CD4-positive, alpha-beta T cell (primary cell): ENCODE measurements at regions of chr1 and their contacts with region 1.

Region 1: GRCh38 chr1:154558575-154559465 is at the start of gene UBE2Q1:
- DNase-seq: peak; percentile 99 to 100 (median 99)
- ATAC-seq: peak; percentile 87
- H3K4me3 ChIP-seq: peak within 1 kb of the TSS; percentile 87
- H3K4me3 Mint-ChIP-seq: peak within 1 kb of the TSS; percentile 91
- H3K27ac ChIP-seq: peak within 1 kb of the TSS; percentile 64 to 84
- H3K27ac Mint-ChIP-seq: peak within 1 kb of the TSS; percentile 83
- H3K4me1 ChIP-seq: peaks cover 46% of the 10 kb centered on the region
- H3K4me1 Mint-ChIP-seq: peaks cover 42% of the 10 kb centered on the region
- H3K27me3 ChIP-seq: no peaks in the 10 kb centered on the region
- H3K27me3 Mint-ChIP-seq: no peaks in the 10 kb centered on the region
- CTCF ChIP-seq: no peak
- total RNA-seq, gene UBE2Q1: 78.7 to 82.3 TPM

Region 2: DNA sequence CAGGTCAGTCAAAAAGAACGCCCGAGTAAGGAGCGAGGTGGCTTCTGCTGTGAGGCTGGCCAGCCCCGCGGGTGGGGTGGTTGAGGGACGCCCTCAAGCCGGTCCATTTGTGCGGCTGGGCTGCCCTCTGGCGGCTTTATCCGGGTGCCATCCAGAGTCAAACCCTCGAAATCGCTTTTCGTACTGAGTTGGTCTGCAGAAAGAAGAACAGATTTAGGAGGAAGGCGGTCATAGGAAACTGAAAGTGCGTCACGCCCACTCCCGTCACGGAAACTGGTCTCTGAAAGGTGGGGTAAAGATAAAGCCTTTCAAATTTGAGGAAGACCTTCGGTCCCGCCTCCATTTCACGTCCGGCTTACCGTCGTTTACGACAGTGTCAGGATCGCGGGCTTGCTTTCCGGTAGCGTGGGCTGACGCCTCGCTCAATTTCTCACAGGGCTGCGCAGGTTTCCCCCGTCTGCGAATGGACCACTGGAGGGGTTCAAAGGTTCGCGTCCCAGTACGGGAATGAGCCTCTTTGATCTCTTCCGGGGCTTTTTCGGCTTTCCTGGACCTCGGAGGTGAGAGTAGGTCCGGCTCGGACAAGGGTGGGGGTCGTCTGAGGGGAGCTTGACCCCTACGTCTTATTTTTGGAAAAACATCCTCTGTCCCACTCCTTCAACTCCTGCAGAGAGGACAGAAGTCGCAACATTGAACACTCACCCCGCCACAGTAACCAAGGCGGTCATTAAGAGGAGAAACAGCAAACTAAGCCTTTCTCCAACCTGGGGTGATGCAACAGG is 286.4 kb before region 1 on chr1 and contains the start of gene HAX1:
- CTCF ChIA-PET with region 1: no interaction called
- POLR2A ChIA-PET with region 1: no interaction called
- intact Hi-C with region 1: loop called in 1 of 2 experiments (anchors 5 kb)
- DNase-seq: peak; percentile 90 to 99 (median 94)
- ATAC-seq: peak; percentile 85
- H3K4me3 ChIP-seq: peak within 1 kb of the TSS; percentile 82
- H3K4me3 Mint-ChIP-seq: peak within 1 kb of the TSS; percentile 96
- H3K27ac ChIP-seq: peak within 1 kb of the TSS; percentile 81 to 89
- H3K27ac Mint-ChIP-seq: peak within 1 kb of the TSS; percentile 97
- H3K4me1 ChIP-seq: peaks cover 27% of the 10 kb centered on the region
- H3K4me1 Mint-ChIP-seq: peaks cover 37% of the 10 kb centered on the region
- H3K27me3 ChIP-seq: no peaks in the 10 kb centered on the region
- H3K27me3 Mint-ChIP-seq: no peaks in the 10 kb centered on the region
- CTCF ChIP-seq: peak; percentile 76
- total RNA-seq, gene HAX1: 57.5 to 62.5 TPM

Region 3: GRCh38 chr1:154371436-154371835 is 187.4 kb before region 1 on chr1:
- CTCF ChIA-PET with region 1: no interaction called
- POLR2A ChIA-PET with region 1: no interaction called
- intact Hi-C with region 1: no loop called
- DNase-seq: no peak
- ATAC-seq: no peak
- H3K4me3 ChIP-seq: no peak overlapping the region
- H3K4me3 Mint-ChIP-seq: no peak overlapping the region
- H3K27ac ChIP-seq: no peak overlapping the region
- H3K27ac Mint-ChIP-seq: no peak overlapping the region
- H3K4me1 ChIP-seq: peaks cover 5% of the 10 kb centered on the region
- H3K4me1 Mint-ChIP-seq: peaks cover 9% of the 10 kb centered on the region
- H3K27me3 ChIP-seq: no peaks in the 10 kb centered on the region
- H3K27me3 Mint-ChIP-seq: no peaks in the 10 kb centered on the region
- CTCF ChIP-seq: no peak

Region 4: GRCh38 chr1:154607609-154608396 is 49.0 kb after region 1 on chr1 and contains the start of gene ADAR:
- CTCF ChIA-PET with region 1: no interaction called
- POLR2A ChIA-PET with region 1: interaction called, 8 read pairs
- intact Hi-C with region 1: loop called (anchors 2 kb)
- DNase-seq: peak; percentile 75 to 98 (median 88)
- ATAC-seq: peak; percentile 76
- H3K4me3 ChIP-seq: peak within 1 kb of the TSS; percentile 88
- H3K4me3 Mint-ChIP-seq: peak within 1 kb of the TSS; percentile 95
- H3K27ac ChIP-seq: peak within 1 kb of the TSS; percentile 88 to 95
- H3K27ac Mint-ChIP-seq: peak within 1 kb of the TSS; percentile 93
- H3K4me1 ChIP-seq: peaks cover 53% of the 10 kb centered on the region
- H3K4me1 Mint-ChIP-seq: peaks cover 86% of the 10 kb centered on the region
- H3K27me3 ChIP-seq: no peaks in the 10 kb centered on the region
- H3K27me3 Mint-ChIP-seq: no peaks in the 10 kb centered on the region
- CTCF ChIP-seq: no peak
- total RNA-seq, gene ADAR: 206 to 210 TPM

Region 5: GRCh38 chr1:154657556-154657955 is 98.7 kb after region 1 on chr1:
- CTCF ChIA-PET with region 1: no interaction called
- POLR2A ChIA-PET with region 1: no interaction called
- intact Hi-C with region 1: no loop called
- DNase-seq: no peak
- ATAC-seq: no peak
- H3K4me3 ChIP-seq: no peak overlapping the region
- H3K4me3 Mint-ChIP-seq: no peak overlapping the region
- H3K27ac ChIP-seq: no peak overlapping the region
- H3K27ac Mint-ChIP-seq: no peak overlapping the region
- H3K4me1 ChIP-seq: no peaks in the 10 kb centered on the region
- H3K4me1 Mint-ChIP-seq: no peaks in the 10 kb centered on the region
- H3K27me3 ChIP-seq: peaks cover 0 to 8% of the 10 kb centered on the region in 2 experiments
- H3K27me3 Mint-ChIP-seq: peaks cover 45% of the 10 kb centered on the region
- CTCF ChIP-seq: no peak

Region 6: GRCh38 chr1:154760469-154760933 is 201.7 kb after region 1 on chr1:
- CTCF ChIA-PET with region 1: interaction called, 8 read pairs
- POLR2A ChIA-PET with region 1: interaction called, 4 read pairs
- intact Hi-C with region 1: loop called (anchors 1 kb)
- DNase-seq: peak; percentile 70 to 92 (median 83)
- ATAC-seq: peak; percentile 88
- H3K4me3 ChIP-seq: peak overlapping the region; percentile 44
- H3K4me3 Mint-ChIP-seq: no peak overlapping the region
- H3K27ac ChIP-seq: no peak overlapping the region
- H3K27ac Mint-ChIP-seq: no peak overlapping the region
- H3K4me1 ChIP-seq: peaks cover 21% of the 10 kb centered on the region
- H3K4me1 Mint-ChIP-seq: peaks cover 42% of the 10 kb centered on the region
- H3K27me3 ChIP-seq: no peaks in the 10 kb centered on the region
- H3K27me3 Mint-ChIP-seq: no peaks in the 10 kb centered on the region
- CTCF ChIP-seq: peak; percentile 92

Region 7: DNA sequence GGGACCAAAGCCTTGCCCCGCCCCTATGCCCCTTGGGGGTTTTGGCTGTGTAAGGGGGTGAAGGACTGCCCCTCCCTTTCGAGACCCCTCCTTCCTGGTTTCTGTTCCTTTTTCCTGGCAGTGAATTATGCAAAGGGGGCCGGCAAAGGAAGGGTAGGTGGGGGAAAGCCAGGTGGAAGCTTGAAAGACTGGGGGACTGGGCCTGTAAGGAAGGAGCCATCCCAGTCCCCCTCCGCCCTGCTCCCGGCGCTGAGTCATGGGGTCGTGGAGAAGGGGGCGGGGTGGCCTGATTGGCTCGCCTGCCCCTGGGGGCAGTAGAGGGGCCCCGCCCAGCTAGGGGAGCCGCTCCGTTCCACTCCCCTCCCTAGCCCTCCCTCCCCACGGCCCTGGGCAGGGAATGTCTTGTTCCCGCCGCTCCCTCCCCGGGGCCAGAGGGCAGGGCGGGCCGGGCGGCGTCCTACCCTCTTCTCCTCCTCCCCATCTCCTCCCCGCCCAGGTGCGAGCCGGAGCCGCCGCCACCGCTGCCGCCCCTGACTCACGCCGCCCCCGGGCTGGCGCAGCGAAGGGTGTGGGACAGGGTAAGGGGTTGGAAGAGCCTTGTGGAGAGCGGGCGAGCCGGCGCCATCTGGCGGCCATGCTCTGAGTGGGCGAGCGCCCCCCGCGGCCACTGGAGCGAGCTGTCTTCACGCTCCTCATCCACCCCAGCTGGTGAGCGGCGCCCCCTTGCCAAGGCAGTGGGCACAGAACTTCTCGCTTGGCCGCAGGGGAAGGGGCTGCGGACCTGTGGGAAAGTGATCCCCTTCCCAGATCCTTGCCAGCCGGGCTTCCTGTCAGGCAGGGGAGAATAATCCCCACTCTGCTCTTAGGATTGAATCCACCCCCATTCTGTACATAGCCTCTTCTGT is 458.5 kb after region 1 on chr1:
- CTCF ChIA-PET with region 1: interaction called, 6 read pairs
- POLR2A ChIA-PET with region 1: interaction called, 5 read pairs
- intact Hi-C with region 1: loop called (anchors 1 to 5 kb)
- DNase-seq: peak; percentile 84 to 95 (median 88)
- ATAC-seq: peak; percentile 86
- H3K4me3 ChIP-seq: peak overlapping the region; percentile 45
- H3K4me3 Mint-ChIP-seq: peak overlapping the region; percentile 67
- H3K27ac ChIP-seq: peak overlapping the region; percentile 73 to 77
- H3K27ac Mint-ChIP-seq: peak overlapping the region; percentile 92
- H3K4me1 ChIP-seq: peaks cover 76% of the 10 kb centered on the region
- H3K4me1 Mint-ChIP-seq: peaks cover 76% of the 10 kb centered on the region
- H3K27me3 ChIP-seq: no peaks in the 10 kb centered on the region
- H3K27me3 Mint-ChIP-seq: no peaks in the 10 kb centered on the region
- CTCF ChIP-seq: peak; percentile 100

Region 8: GRCh38 chr1:155513300-155513916 is 954.6 kb after region 1 on chr1:
- CTCF ChIA-PET with region 1: no interaction called
- POLR2A ChIA-PET with region 1: no interaction called
- intact Hi-C with region 1: no loop called
- DNase-seq: peak in 2 of 14 experiments; percentile 24 to 32
- ATAC-seq: no peak
- H3K4me3 ChIP-seq: no peak overlapping the region
- H3K4me3 Mint-ChIP-seq: no peak overlapping the region
- H3K27ac ChIP-seq: no peak overlapping the region
- H3K27ac Mint-ChIP-seq: peak overlapping the region; percentile 82
- H3K4me1 ChIP-seq: peaks cover 20% of the 10 kb centered on the region
- H3K4me1 Mint-ChIP-seq: peaks cover 61% of the 10 kb centered on the region
- H3K27me3 ChIP-seq: no peaks in the 10 kb centered on the region
- H3K27me3 Mint-ChIP-seq: no peaks in the 10 kb centered on the region
- CTCF ChIP-seq: no peak